A549 (cell line): ENCODE measurements at regions of chrX and their contacts with region 1.

Region 1: DNA sequence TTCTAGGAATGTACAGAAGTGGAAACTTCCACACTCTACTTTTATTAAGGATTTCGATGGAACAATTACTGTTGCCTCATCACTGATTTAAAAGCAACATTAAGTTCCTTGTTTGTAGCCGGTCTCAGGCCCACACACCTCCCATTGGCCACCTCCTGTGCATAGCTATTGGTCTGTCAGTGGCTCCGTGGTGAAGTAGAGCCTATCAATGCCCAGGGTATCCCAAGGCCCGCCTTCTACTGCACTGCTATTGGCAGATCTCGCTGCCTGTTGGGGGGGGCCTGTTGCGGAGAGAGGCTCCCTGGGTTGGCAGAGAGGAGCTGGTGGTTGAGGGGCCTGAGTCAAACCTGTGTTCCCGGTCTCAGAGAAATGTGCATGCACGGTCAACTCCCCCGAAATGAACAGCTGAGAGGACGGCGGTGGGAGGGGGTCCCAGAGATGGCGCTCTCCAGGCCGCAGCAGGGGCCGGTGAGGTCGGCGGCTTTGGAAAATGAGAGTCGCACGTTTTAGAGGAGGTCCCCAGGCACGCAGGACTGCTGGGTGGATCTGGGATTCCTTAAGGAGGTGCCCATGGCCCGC is 4.9 kb upstream of the ARAF start:
- DNase-seq: peak; percentile 81 to 96
- ATAC-seq: peak; percentile 96 to 97
- H3K4me3 ChIP-seq: peak overlapping the region; percentile 49
- H3K27ac ChIP-seq: peak overlapping the region; percentile 83 to 89
- H3K4me1 ChIP-seq: peaks cover 9% of the 10 kb centered on the region; the same call in 1 of the 3 replicates
- CTCF ChIP-seq: no peak
- EP300 ChIP-seq: no peak
- POLR2A ChIP-seq: peak; percentile 81
- RAD21 ChIP-seq: no peak

Region 2: DNA sequence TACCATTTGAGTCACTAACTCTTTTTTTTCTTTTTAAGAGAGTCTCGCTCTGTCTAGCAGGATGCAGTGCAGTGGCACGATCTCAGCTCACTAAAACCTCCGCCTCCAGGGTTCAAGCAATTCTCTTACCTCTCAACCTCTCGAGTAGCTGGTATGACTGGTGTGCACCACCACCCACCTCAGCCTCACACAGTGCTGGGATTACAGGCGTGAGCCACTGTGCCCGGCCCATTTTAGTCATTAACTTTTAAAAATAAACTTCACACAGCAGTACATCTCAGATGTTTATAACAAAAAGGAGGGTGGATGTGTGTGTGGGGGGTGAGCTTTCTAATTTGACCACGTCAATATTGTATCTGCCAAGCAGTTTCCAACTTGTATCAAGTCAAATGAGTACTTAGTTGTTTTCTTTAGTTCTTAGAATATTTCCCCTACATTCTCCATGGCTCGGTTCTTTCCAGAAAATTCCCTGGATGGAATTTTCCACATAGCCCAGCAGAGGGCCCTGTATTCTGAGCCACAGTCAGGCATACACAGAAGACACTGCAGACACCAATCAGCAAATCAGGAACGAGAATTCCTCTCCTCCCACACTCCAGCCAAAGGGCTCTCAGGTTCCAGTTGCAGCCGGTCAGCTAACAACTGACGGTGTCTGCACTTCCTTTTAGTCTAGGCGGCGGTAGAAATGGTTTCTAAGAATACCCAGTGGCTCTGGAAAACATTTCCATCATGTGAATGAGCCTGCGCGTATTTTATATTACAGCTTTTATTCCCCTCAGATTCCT is 15.2 kb before region 1 on chrX:
- CTCF ChIA-PET with region 1: interaction called, 8 read pairs
- POLR2A ChIA-PET with region 1: interaction called, 11 read pairs
- DNase-seq: peak; percentile 90 to 91
- ATAC-seq: peak; percentile 100
- H3K4me3 ChIP-seq: no peak overlapping the region
- H3K27ac ChIP-seq: peak overlapping the region; percentile 37 to 72; a peak in 4 of 6 replicates
- H3K4me1 ChIP-seq: no peaks in the 10 kb centered on the region
- CTCF ChIP-seq: peak; percentile 54
- EP300 ChIP-seq: no peak
- POLR2A ChIP-seq: peak; percentile 33; the same call in 1 of the 2 replicates
- RAD21 ChIP-seq: peak; percentile 50 to 62

Region 3: GRCh38 chrX:47581731-47582647 is 25.9 kb after region 1 on chrX and contains the start of gene TIMP1:
- CTCF ChIA-PET with region 1: no interaction called
- POLR2A ChIA-PET with region 1: interaction called, 11 read pairs
- DNase-seq: peak; percentile 81 to 88
- ATAC-seq: peak; percentile 94 to 98
- H3K4me3 ChIP-seq: peak within 1 kb of the TSS; percentile 57
- H3K27ac ChIP-seq: peak within 1 kb of the TSS; percentile 84 to 97
- H3K4me1 ChIP-seq: peaks cover 22% of the 10 kb centered on the region; the same call in 2 of the 3 replicates
- CTCF ChIP-seq: no peak
- EP300 ChIP-seq: no peak
- POLR2A ChIP-seq: peak; percentile 59
- RAD21 ChIP-seq: no peak
- polyA plus RNA-seq, gene TIMP1: 83.2 and 131 TPM in 2 replicates